Naive thymus-derived CD4-positive, alpha-beta T cell (primary cell): ENCODE measurements at regions of chr6 and their contacts with region 1.

Region 1: GRCh38 chr6:45156075-45156474 is 172.1 kb upstream of the RUNX2 start:
- DNase-seq: peak in 7 of 9 donors; percentile 46 to 81 (median 76)
- ATAC-seq: peak; percentile 96
- H3K4me3 ChIP-seq: no peak overlapping the region
- H3K4me3 Mint-ChIP-seq: peak overlapping the region in 9 of 10 donors; percentile 0 to 63 (median 39)
- H3K27ac ChIP-seq: no peak overlapping the region
- H3K27ac Mint-ChIP-seq: peak overlapping the region in 8 of 9 donors; percentile 27 to 89 (median 60)
- H3K4me1 ChIP-seq: peaks cover 7 to 12% of the 10 kb centered on the region in 2 donors
- H3K4me1 Mint-ChIP-seq: peaks cover 2 to 43% (median 29%) of the 10 kb centered on the region in 7 donors
- H3K27me3 ChIP-seq: no peaks in the 10 kb centered on the region
- H3K27me3 Mint-ChIP-seq: no peaks in the 10 kb centered on the region

Region 2: GRCh38 chr6:44932651-44933091 is 223.4 kb before region 1 on chr6:
- CTCF ChIA-PET with region 1: no interaction called
- POLR2A ChIA-PET with region 1: no interaction called
- intact Hi-C with region 1: loop called in 1 of 2 experiments (anchors 2 kb)
- DNase-seq: peak in 7 of 9 donors; percentile 46 to 66 (median 58)
- ATAC-seq: peak; percentile 91
- H3K4me3 ChIP-seq: peak overlapping the region; percentile 37
- H3K4me3 Mint-ChIP-seq: peak overlapping the region; percentile 78 to 98 (median 88)
- H3K27ac ChIP-seq: peak overlapping the region; percentile 71
- H3K27ac Mint-ChIP-seq: peak overlapping the region; percentile 92 to 99 (median 96)
- H3K4me1 ChIP-seq: peaks cover 17 to 42% of the 10 kb centered on the region in 2 donors
- H3K4me1 Mint-ChIP-seq: peaks cover 26 to 67% (median 60%) of the 10 kb centered on the region in 7 donors
- H3K27me3 ChIP-seq: no peaks in the 10 kb centered on the region
- H3K27me3 Mint-ChIP-seq: no peaks in the 10 kb centered on the region

Region 3: GRCh38 chr6:45021676-45022075 is 134.4 kb before region 1 on chr6:
- CTCF ChIA-PET with region 1: no interaction called
- POLR2A ChIA-PET with region 1: no interaction called
- intact Hi-C with region 1: loop called in 1 of 2 experiments (anchors 5 kb)
- DNase-seq: peak in 7 of 9 donors; percentile 6 to 55 (median 28)
- ATAC-seq: peak; percentile 67
- H3K4me3 ChIP-seq: no peak overlapping the region
- H3K4me3 Mint-ChIP-seq: peak overlapping the region in 2 of 10 donors; percentile 6 to 7
- H3K27ac ChIP-seq: no peak overlapping the region
- H3K27ac Mint-ChIP-seq: peak overlapping the region in 2 of 9 donors; percentile 23 to 34
- H3K4me1 ChIP-seq: peaks cover 0 to 4% of the 10 kb centered on the region in 2 donors
- H3K4me1 Mint-ChIP-seq: peaks cover 9 to 20% (median 19%) of the 10 kb centered on the region in 7 donors
- H3K27me3 ChIP-seq: no peaks in the 10 kb centered on the region
- H3K27me3 Mint-ChIP-seq: no peaks in the 10 kb centered on the region

Region 4: GRCh38 chr6:45226081-45226480 is 70.0 kb after region 1 on chr6:
- CTCF ChIA-PET with region 1: no interaction called
- POLR2A ChIA-PET with region 1: no interaction called
- intact Hi-C with region 1: no loop called
- DNase-seq: no peak
- ATAC-seq: no peak
- H3K4me3 ChIP-seq: no peak overlapping the region
- H3K4me3 Mint-ChIP-seq: no peak overlapping the region
- H3K27ac ChIP-seq: no peak overlapping the region
- H3K27ac Mint-ChIP-seq: no peak overlapping the region
- H3K4me1 ChIP-seq: no peaks in the 10 kb centered on the region
- H3K4me1 Mint-ChIP-seq: peaks cover 0 to 6% (median 3%) of the 10 kb centered on the region in 7 donors
- H3K27me3 ChIP-seq: no peaks in the 10 kb centered on the region
- H3K27me3 Mint-ChIP-seq: no peaks in the 10 kb centered on the region

Region 5: DNA sequence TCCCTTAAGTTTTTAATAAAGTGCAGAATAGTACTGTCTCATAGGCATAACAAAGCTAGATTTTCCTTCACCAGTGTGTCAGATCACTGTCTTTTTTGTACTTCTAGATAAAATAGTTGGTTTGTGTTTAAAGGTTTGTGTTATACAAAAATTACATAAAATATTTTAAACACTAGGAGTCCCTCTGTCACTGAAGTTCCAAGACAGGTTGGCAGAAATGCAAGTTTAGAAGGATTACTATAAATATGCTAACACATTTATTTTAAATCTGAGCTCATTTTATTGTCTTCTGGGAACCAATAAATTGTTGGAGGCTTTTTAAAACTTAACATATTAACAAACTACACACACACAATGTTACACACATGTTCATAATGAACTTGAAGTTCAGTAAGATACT is 141.2 kb after region 1 on chr6:
- CTCF ChIA-PET with region 1: no interaction called
- POLR2A ChIA-PET with region 1: no interaction called
- intact Hi-C with region 1: loop called in 1 of 2 experiments (anchors 1 kb)
- DNase-seq: no peak
- ATAC-seq: no peak
- H3K4me3 ChIP-seq: no peak overlapping the region
- H3K4me3 Mint-ChIP-seq: no peak overlapping the region
- H3K27ac ChIP-seq: no peak overlapping the region
- H3K27ac Mint-ChIP-seq: peak overlapping the region in 6 of 9 donors; percentile 4 to 56 (median 19)
- H3K4me1 ChIP-seq: peaks cover 0 to 14% of the 10 kb centered on the region in 2 donors
- H3K4me1 Mint-ChIP-seq: peaks cover 21 to 74% (median 43%) of the 10 kb centered on the region in 7 donors
- H3K27me3 ChIP-seq: no peaks in the 10 kb centered on the region
- H3K27me3 Mint-ChIP-seq: no peaks in the 10 kb centered on the region